HCT116 (cell line): ENCODE measurements at regions of chr7 and their contacts with region 1.

Region 1: GRCh38 chr7:109092268-109092667 is 522.6 kb downstream of the DNAJB9 start:
- DNase-seq: peak; percentile 0
- ATAC-seq: peak; percentile 60
- H3K4me3 ChIP-seq: no peak overlapping the region
- H3K27ac ChIP-seq: no peak overlapping the region
- H3K4me1 ChIP-seq: no peaks in the 10 kb centered on the region
- H3K27me3 ChIP-seq: no peaks in the 10 kb centered on the region
- CTCF ChIP-seq: peak in 2 of 3 experiments; percentile 43 to 45; a peak in 4 of 6 replicates
- POLR2A ChIP-seq: no peak
- RAD21 ChIP-seq: peak; percentile 15; the same call in 1 of the 2 replicates

Region 2: DNA sequence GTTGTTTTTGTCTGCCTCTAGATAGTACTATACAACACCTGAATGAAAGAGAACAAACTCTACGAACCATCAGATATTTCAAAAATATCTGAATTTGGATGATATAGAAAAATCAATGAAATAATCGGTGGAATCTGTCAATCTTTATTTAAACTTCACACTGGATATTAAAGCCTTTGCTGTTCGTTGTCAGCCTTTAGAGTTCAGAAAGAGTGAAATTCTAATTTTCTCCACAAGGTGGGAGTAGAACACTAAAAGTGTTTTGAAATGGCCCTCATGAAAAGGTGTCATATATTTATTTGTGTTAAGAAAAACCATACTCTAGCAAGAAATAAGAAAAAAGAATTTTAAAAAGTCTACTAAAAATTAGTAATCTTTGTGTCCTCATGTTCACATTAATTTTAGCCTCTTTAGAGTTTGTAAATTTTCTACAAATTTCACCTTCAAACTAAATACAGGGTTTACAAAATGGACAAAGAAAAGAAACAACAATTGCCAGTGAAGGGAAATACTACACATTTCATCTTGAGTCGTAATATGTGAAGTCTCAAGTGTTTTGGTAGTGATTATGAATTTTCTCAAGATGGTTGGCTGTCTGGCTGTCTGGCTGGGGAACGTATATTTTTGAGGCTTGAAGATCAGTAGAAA is 479.0 kb before region 1 on chr7:
- CTCF ChIA-PET with region 1: no interaction called
- POLR2A ChIA-PET with region 1: no interaction called
- RAD21 ChIA-PET with region 1: no interaction called
- intact Hi-C with region 1: loop called (anchors 5 kb)
- DNase-seq: peak; percentile 33
- ATAC-seq: peak; percentile 77
- H3K4me3 ChIP-seq: no peak overlapping the region
- H3K27ac ChIP-seq: no peak overlapping the region
- H3K4me1 ChIP-seq: no peaks in the 10 kb centered on the region
- H3K27me3 ChIP-seq: no peaks in the 10 kb centered on the region
- CTCF ChIP-seq: peak; percentile 49 to 78 (median 52)
- POLR2A ChIP-seq: no peak
- RAD21 ChIP-seq: peak; percentile 76